ENCODE measurements at regions of chr1 and their contacts with region 1.

Region 1: GRCh38 chr1:166166695-166167571 is at the start of gene FAM78B:
- DNase-seq: peak; percentile 52
- H3K4me3 Mint-ChIP-seq: peak within 1 kb of the TSS; percentile 82
- H3K27ac Mint-ChIP-seq: peak within 1 kb of the TSS; percentile 53
- H3K4me1 Mint-ChIP-seq: peaks cover 32% of the 10 kb centered on the region
- H3K27me3 Mint-ChIP-seq: peaks cover 47% of the 10 kb centered on the region
- total RNA-seq, gene FAM78B: 1.2 and 1.4 TPM in 2 replicates

Region 2: GRCh38 chr1:165352442-165353293 is 814.3 kb before region 1 on chr1:
- intact Hi-C with region 1: loop called (anchors 5 kb)
- DNase-seq: no peak
- H3K4me3 Mint-ChIP-seq: no peak overlapping the region
- H3K27ac Mint-ChIP-seq: no peak overlapping the region
- H3K4me1 Mint-ChIP-seq: peaks cover 2% of the 10 kb centered on the region
- H3K27me3 Mint-ChIP-seq: peaks cover 82% of the 10 kb centered on the region

Region 3: GRCh38 chr1:165697881-165698760 is 468.8 kb before region 1 on chr1 and contains the start of gene ALDH9A1:
- intact Hi-C with region 1: loop called (anchors 5 kb)
- DNase-seq: peak; percentile 84
- H3K4me3 Mint-ChIP-seq: peak within 1 kb of the TSS; percentile 100
- H3K27ac Mint-ChIP-seq: peak within 1 kb of the TSS; percentile 99
- H3K4me1 Mint-ChIP-seq: peaks cover 18% of the 10 kb centered on the region
- H3K27me3 Mint-ChIP-seq: peaks cover 3% of the 10 kb centered on the region
- total RNA-seq, gene ALDH9A1: 43.3 and 47.4 TPM in 2 replicates

Region 4: DNA sequence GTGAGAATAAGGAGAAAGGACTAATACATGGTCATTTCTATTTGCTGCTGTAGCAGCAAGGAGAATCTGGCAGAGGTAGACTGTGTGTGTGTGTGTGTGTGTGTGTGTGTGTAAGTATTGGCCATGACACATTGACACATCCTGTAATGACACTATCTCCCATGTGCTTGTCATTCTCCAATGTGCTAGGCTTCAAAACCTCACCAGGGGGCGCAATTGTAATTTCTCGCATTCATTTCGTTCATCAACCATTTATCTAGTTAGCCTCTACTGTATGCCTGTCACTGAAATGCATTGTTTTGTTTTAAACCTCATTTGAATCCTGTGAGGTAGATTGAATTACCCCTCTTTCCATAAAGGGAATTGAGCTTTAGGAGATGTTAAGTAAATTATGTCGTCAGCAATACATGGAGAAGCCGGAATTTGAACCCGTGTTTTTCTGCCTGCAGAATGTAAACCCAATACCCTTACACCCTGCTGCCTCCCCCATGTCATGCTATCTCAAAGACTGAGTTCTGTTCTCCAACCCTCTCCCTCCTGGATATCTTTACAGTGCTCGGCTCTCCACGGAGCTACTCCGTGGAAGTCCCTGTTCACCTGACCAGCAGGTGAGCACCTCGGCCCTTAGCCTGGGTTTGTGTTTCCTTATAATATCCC is 238.7 kb before region 1 on chr1:
- intact Hi-C with region 1: loop called (anchors 5 kb)
- DNase-seq: peak; percentile 40
- H3K4me3 Mint-ChIP-seq: no peak overlapping the region
- H3K27ac Mint-ChIP-seq: no peak overlapping the region
- H3K4me1 Mint-ChIP-seq: peaks cover 14% of the 10 kb centered on the region
- H3K27me3 Mint-ChIP-seq: peaks cover 7% of the 10 kb centered on the region

Region 5: GRCh38 chr1:166083887-166084286 is 83.0 kb before region 1 on chr1:
- intact Hi-C with region 1: loop called (anchors 1 kb)
- DNase-seq: no peak
- H3K4me3 Mint-ChIP-seq: no peak overlapping the region
- H3K27ac Mint-ChIP-seq: peak overlapping the region; percentile 29
- H3K4me1 Mint-ChIP-seq: peaks cover 29% of the 10 kb centered on the region
- H3K27me3 Mint-ChIP-seq: no peaks in the 10 kb centered on the region

Region 6: GRCh38 chr1:166233750-166234366 is 66.9 kb after region 1 on chr1:
- intact Hi-C with region 1: no loop called
- DNase-seq: no peak
- H3K4me3 Mint-ChIP-seq: no peak overlapping the region
- H3K27ac Mint-ChIP-seq: no peak overlapping the region
- H3K4me1 Mint-ChIP-seq: peaks cover 1% of the 10 kb centered on the region
- H3K27me3 Mint-ChIP-seq: no peaks in the 10 kb centered on the region

Region 7: DNA sequence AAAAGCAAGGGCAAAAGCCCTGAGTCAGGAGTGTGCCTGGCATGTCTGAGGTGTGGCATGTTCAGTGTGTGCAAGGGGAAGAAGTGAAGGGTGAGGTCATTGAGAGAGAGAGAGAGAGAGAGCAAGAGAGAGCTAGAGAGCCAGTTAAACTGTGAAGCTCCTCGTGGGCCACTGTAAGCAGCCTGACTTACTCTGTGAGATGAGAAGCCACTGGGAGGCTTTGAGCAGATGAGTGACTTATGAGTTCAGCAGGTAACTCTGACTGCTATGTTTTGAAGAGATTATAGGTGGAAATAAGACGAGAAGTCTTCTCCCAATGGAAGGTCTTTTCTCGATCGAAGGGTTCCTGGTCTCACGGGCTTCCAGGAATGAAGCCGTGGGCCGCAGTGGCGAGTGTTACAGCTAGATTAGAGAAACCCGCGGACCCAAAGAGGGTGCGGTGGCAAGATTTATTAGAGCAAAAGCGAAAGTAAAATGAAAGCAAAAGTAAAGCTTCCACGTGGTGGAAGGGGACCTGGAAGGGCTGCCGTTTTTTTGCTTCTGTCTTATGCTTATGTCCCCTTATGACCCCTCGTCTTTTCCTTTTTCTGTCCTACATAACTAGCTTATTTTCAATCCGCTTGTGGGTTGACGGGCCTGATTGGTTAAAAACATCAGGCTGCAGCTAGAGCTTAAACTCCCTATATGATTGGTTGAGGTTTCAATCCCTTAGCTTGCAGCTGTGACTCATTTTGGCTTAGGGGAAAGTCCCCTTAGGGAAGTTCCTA is 322.9 kb after region 1 on chr1:
- intact Hi-C with region 1: loop called (anchors 10 kb)
- DNase-seq: peak; percentile 45
- H3K4me3 Mint-ChIP-seq: no peak overlapping the region
- H3K27ac Mint-ChIP-seq: no peak overlapping the region
- H3K4me1 Mint-ChIP-seq: peaks cover 14% of the 10 kb centered on the region
- H3K27me3 Mint-ChIP-seq: peaks cover 1% of the 10 kb centered on the region

Region 8: GRCh38 chr1:166875734-166876539 is 709.0 kb after region 1 on chr1 and contains the start of gene TADA1:
- intact Hi-C with region 1: loop called (anchors 10 kb)
- DNase-seq: peak; percentile 98
- H3K4me3 Mint-ChIP-seq: peak within 1 kb of the TSS; percentile 96
- H3K27ac Mint-ChIP-seq: peak within 1 kb of the TSS; percentile 99
- H3K4me1 Mint-ChIP-seq: peaks cover 45% of the 10 kb centered on the region
- H3K27me3 Mint-ChIP-seq: peaks cover 2% of the 10 kb centered on the region
- total RNA-seq, gene TADA1: 15.3 and 16.0 TPM in 2 replicates

Measured in activated T-helper 2 cell treated with anti-CD3 and anti-CD28 coated beads, Interferon-gamma antibody, Interleukin-2, Interleukin-4, amounts not matched to agents 10 μg/mL and 5 μg/mL and 100 μg/mL, durations not matched to agents 14 hours and 24 hours and 36 hours (primary cell).